Natural killer cell (primary cell): ENCODE measurements at regions of chr18 and their contacts with region 1.

Region 1: DNA sequence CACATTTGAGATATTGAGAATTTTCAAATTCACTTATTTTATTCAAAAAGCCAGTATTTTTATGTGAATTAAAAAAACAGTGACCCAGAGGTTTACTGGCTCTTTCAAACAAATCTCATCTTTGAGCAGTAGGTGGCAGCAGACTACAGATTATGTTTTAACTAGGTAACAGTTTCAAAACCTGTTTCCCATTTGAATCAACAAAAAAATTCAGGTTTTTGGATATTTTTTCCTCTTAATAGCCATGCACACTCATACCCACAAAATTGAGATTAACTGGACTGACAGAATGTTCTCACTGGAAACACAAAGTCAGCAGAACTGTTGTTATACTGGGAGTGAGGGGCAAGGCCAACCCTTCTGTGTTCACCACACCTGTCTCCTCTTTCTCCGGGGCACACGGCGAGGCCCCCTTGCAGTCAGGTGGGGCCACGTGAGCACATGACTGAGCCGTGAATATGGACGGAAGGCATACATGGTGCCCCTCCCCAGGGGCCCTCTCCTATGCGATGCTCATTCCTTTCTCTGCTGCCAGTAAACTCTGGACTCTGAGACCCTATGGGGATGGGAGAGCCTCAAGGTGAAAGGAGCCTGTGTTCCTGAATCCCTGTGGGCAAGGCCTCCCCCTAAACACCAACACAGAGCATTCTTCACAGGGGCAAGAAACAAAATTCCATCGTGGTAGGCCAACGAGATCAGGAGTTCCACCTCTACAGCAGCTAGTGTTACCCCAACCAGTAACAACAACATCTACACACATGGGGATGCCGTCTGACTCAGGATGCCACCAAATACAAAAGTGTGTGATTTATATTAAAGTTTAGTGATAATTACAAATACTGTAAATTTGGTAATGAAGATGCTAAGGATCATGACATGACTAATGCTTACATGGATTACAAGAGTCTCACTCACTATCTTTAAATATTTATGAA is 80.4 kb downstream of the LPIN2 start:
- DNase-seq: peak in 1 of 2 donors; percentile 86
- ATAC-seq: peak; percentile 68 to 79 (median 69)
- H3K4me3 ChIP-seq: no peak overlapping the region
- H3K4me3 Mint-ChIP-seq: no peak overlapping the region
- H3K27ac ChIP-seq: no peak overlapping the region
- H3K27ac Mint-ChIP-seq: peak overlapping the region; percentile 76 to 77
- H3K4me1 ChIP-seq: peaks cover 5% of the 10 kb centered on the region
- H3K4me1 Mint-ChIP-seq: peaks cover 17 to 19% of the 10 kb centered on the region in 2 donors
- H3K27me3 ChIP-seq: no peaks in the 10 kb centered on the region
- H3K27me3 Mint-ChIP-seq: no peaks in the 10 kb centered on the region
- CTCF ChIP-seq: peak; percentile 84

Region 2: GRCh38 chr18:2236232-2236631 is 696.3 kb before region 1 on chr18:
- intact Hi-C with region 1: no loop called
- DNase-seq: no peak
- ATAC-seq: no peak
- H3K4me3 ChIP-seq: no peak overlapping the region
- H3K4me3 Mint-ChIP-seq: no peak overlapping the region
- H3K27ac ChIP-seq: no peak overlapping the region
- H3K27ac Mint-ChIP-seq: no peak overlapping the region
- H3K4me1 ChIP-seq: no peaks in the 10 kb centered on the region
- H3K4me1 Mint-ChIP-seq: no peaks in the 10 kb centered on the region
- H3K27me3 ChIP-seq: peaks cover 5% of the 10 kb centered on the region
- H3K27me3 Mint-ChIP-seq: peaks cover 7 to 18% of the 10 kb centered on the region in 2 donors
- CTCF ChIP-seq: no peak

Region 3: GRCh38 chr18:2985628-2986027 is 53.1 kb after region 1 on chr18:
- intact Hi-C with region 1: loop called (anchors 1 kb)
- DNase-seq: peak in 1 of 2 donors; percentile 80
- ATAC-seq: peak; percentile 41 to 54 (median 42)
- H3K4me3 ChIP-seq: no peak overlapping the region
- H3K4me3 Mint-ChIP-seq: no peak overlapping the region
- H3K27ac ChIP-seq: no peak overlapping the region
- H3K27ac Mint-ChIP-seq: peak overlapping the region in 1 of 2 donors; percentile 4
- H3K4me1 ChIP-seq: peaks cover 12% of the 10 kb centered on the region
- H3K4me1 Mint-ChIP-seq: peaks cover 38 to 44% of the 10 kb centered on the region in 2 donors
- H3K27me3 ChIP-seq: no peaks in the 10 kb centered on the region
- H3K27me3 Mint-ChIP-seq: no peaks in the 10 kb centered on the region
- CTCF ChIP-seq: peak; percentile 74

Region 4: GRCh38 chr18:3129053-3129864 is 196.7 kb after region 1 on chr18:
- intact Hi-C with region 1: loop called (anchors 1 kb)
- DNase-seq: peak; percentile 72 to 90
- ATAC-seq: peak; percentile 92 to 99 (median 99)
- H3K4me3 ChIP-seq: no peak overlapping the region
- H3K4me3 Mint-ChIP-seq: no peak overlapping the region
- H3K27ac ChIP-seq: no peak overlapping the region
- H3K27ac Mint-ChIP-seq: no peak overlapping the region
- H3K4me1 ChIP-seq: no peaks in the 10 kb centered on the region
- H3K4me1 Mint-ChIP-seq: peaks cover 7 to 8% of the 10 kb centered on the region in 2 donors
- H3K27me3 ChIP-seq: no peaks in the 10 kb centered on the region
- H3K27me3 Mint-ChIP-seq: peaks cover 0 to 3% of the 10 kb centered on the region in 2 donors
- CTCF ChIP-seq: peak; percentile 75

Region 5: GRCh38 chr18:3151399-3152264 is 219.1 kb after region 1 on chr18:
- intact Hi-C with region 1: loop called (anchors 1 kb)
- DNase-seq: peak in 1 of 2 donors; percentile 61
- ATAC-seq: peak in 2 of 3 donors; percentile 44 to 46
- H3K4me3 ChIP-seq: no peak overlapping the region
- H3K4me3 Mint-ChIP-seq: no peak overlapping the region
- H3K27ac ChIP-seq: no peak overlapping the region
- H3K27ac Mint-ChIP-seq: no peak overlapping the region
- H3K4me1 ChIP-seq: peaks cover 3% of the 10 kb centered on the region
- H3K4me1 Mint-ChIP-seq: peaks cover 0 to 4% of the 10 kb centered on the region in 2 donors
- H3K27me3 ChIP-seq: no peaks in the 10 kb centered on the region
- H3K27me3 Mint-ChIP-seq: no peaks in the 10 kb centered on the region
- CTCF ChIP-seq: peak; percentile 94